PC-9 (cell line): ENCODE measurements at regions of chr11 and their contacts with region 1.

Region 1: GRCh38 chr11:114340311-114341131 is 44.3 kb downstream of the NNMT start:
- DNase-seq: peak; percentile 38 to 74
- H3K4me3 ChIP-seq: no peak overlapping the region
- H3K27ac ChIP-seq: no peak overlapping the region
- H3K4me1 ChIP-seq: no peaks in the 10 kb centered on the region
- H3K27me3 ChIP-seq: peaks cover 18% of the 10 kb centered on the region
- CTCF ChIP-seq: peak; percentile 94

Region 2: DNA sequence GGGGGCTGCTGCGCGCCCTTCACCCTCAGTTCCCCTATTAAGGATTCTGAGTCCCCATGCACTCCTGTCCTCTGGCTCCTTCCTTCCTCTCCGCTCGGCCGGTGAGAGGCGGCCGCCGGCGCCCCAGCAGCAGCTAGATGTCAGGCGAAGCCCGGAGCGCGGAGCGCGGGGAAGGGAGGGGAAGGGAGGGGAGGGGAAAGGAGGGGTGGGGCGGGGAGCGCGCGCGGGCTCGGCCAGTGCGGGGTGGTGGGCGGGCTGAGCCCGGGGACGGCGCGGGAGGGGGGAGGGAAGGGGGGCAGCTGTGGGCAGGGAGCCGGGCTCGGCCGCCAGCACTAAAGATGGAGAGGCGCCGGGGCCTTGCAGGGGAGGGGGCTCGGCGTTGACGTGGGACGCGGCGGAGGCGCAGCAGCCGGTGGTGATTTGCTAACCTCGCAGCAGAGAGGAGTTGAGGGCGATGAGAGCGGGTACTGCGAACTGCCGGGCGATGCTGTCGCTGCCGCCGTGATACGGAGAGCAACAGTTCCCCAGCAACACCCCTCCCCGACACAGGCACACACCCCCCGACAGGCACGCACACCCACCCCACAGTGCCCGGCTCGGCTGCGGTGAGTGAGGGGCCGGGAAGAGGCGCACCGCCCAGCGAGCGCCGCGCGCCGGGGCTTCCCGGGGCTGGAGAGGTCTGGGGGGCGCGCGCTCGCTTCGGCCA is 281.1 kb before region 1 on chr11 and contains the start of gene ZBTB16:
- CTCF ChIA-PET with region 1: no interaction called
- POLR2A ChIA-PET with region 1: no interaction called
- intact Hi-C with region 1: no loop called
- DNase-seq: no peak
- H3K4me3 ChIP-seq: no peak within 1 kb of the TSS
- H3K27ac ChIP-seq: no peak within 1 kb of the TSS
- H3K4me1 ChIP-seq: no peaks in the 10 kb centered on the region
- H3K27me3 ChIP-seq: peaks cover 67% of the 10 kb centered on the region
- CTCF ChIP-seq: no peak
- total RNA-seq, gene ZBTB16: 0.25 and 0.44 TPM in 2 replicates

Region 3: GRCh38 chr11:114586797-114587196 is 246.3 kb after region 1 on chr11:
- CTCF ChIA-PET with region 1: no interaction called
- POLR2A ChIA-PET with region 1: no interaction called
- intact Hi-C with region 1: loop called (anchors 10 kb)
- DNase-seq: no peak
- H3K4me3 ChIP-seq: no peak overlapping the region
- H3K27ac ChIP-seq: no peak overlapping the region
- H3K4me1 ChIP-seq: no peaks in the 10 kb centered on the region
- H3K27me3 ChIP-seq: no peaks in the 10 kb centered on the region
- CTCF ChIP-seq: peak; percentile 48